Right ventricle myocardium inferior (tissue), 1 donor: ENCODE measurements at regions of chr5 and their contacts with region 1.

Region 1: GRCh38 chr5:35089334-35090314 is 41.9 kb upstream of the AGXT2 start:
- DNase-seq: no peak
- ATAC-seq: no peak

Region 2: GRCh38 chr5:34957857-34958690 is 131.6 kb before region 1 on chr5:
- intact Hi-C with region 1: no loop called
- DNase-seq: no peak
- ATAC-seq: no peak

Region 3: DNA sequence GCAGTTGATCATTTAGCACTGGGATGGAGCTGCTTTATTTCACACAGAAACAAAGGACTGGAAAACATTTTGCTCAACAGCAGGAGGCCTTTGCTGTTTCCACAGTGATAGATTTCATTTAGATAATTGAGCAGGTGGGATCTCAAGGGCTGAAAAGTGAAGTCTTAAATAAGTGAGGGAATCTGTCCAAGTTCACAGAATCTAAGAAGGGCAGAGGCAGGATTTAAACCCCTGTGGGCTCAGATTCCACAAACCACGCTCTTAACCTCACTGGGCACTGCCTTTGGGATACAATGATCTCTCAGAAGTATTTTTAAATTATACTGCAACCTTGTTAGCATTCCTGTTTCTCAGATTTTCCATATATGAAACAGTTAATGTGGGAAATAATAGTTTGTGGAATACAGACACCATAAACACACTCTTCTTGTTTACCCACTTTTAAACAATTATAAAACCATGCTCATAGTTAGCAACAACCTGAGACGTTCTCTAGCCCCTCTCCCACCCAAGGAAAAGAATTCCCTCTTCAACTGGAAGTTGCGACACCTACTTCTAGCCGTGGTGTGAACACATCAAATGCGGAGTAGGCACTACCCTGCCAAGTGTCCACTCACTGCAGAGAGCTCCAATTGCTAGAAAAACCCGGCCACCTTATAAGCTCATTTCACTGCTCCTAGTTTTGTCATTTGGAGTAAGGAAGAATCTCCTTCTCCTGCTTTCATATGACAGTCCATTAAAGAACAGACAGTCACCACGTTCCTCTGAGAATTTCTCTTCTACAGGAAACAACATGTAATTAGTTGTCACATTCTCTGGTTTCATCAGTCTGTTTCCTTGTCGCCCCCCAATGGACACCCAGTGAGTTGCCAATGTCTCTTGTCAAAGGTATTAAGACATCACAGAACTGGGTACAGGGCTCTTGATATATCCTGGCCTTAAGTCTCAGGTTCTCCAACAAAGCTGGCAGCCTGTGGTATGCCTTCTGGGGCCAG is 93.2 kb after region 1 on chr5:
- intact Hi-C with region 1: loop called (anchors 5 kb)
- DNase-seq: no peak
- ATAC-seq: peak; percentile 42

Region 4: GRCh38 chr5:35285011-35285410 is 195.4 kb after region 1 on chr5:
- intact Hi-C with region 1: no loop called
- DNase-seq: no peak
- ATAC-seq: no peak